HepG2 (cell line): ENCODE measurements at regions of chr2 and their contacts with region 1.

Region 1: DNA sequence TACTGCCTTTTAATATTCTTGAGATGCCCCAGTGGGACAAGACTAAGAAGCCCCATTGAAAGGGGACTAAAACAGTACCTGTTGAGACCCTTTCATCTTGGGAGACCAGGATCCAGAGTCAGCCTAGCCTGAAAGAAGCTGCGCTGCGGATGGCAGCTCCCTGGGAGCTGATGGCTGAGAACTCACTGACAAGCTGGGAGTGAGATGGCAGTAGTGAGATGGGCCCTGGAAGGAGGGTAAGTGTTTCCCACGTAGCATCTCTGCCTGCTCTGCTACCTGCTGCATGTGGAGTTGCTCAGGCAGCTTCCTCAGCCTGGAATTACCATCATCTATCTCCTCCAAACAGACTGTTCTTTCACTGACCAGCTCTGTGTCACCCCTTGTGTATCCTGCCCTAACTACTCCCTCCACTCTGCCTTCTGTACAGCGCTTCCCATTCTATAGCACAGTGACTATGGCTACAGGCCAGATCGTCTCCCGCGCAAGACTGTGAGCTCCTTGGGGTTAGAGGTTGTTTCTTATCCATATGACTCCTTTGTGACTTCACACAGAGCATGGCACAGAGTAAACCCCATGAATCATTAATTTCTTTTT is 330.4 kb downstream of the NBAS start:
- DNase-seq: no peak
- ATAC-seq: peak; percentile 44
- H3K4me3 ChIP-seq: no peak overlapping the region
- H3K27ac ChIP-seq: no peak overlapping the region
- H3K4me1 ChIP-seq: peaks cover 9% of the 10 kb centered on the region
- H3K27me3 ChIP-seq: no peaks in the 10 kb centered on the region
- CTCF ChIP-seq: no peak
- EP300 ChIP-seq: no peak
- POLR2A ChIP-seq: no peak
- RAD21 ChIP-seq: no peak

Region 2: DNA sequence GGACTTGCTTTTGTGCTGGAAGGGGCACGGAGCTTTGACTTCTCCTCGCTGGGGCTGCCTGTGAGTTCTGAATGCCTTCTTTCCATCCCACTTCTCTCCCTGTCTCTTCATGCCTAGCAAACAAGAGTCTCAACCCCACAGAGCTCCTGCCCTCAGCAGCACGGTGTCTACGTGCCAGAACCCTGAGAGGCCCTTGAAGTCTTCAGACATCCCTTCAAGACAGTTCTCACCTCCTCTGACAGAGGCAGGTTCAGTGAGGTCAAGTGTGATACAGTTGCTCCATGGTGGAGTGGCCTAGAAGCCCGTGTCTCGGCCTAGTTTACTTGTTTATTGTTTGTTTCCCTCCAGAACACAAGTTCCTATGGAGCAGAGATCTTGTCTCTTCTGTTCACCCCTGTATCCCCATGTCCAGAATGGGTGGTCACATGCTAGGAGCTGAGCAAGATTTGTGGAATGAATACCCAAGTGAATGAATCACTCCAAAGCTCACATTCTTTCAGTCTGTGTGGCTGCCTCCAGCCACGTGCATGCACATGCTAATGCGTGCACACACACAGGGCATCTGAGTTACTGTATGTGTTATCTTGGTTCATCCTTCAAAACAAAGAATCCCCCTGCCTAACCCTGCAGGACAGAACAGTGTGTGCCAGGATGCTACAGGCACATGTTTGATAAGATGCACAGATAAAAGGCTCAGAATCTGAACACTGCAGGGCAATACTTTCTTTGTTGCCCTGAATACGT is 61.2 kb before region 1 on chr2:
- CTCF ChIA-PET with region 1: no interaction called
- POLR2A ChIA-PET with region 1: no interaction called
- in situ Hi-C with region 1: no loop called
- intact Hi-C with region 1: loop called (anchors 5 kb)
- DNase-seq: peak; percentile 56
- ATAC-seq: no peak
- H3K4me3 ChIP-seq: no peak overlapping the region
- H3K27ac ChIP-seq: no peak overlapping the region
- H3K4me1 ChIP-seq: peaks cover 44% of the 10 kb centered on the region
- H3K27me3 ChIP-seq: no peaks in the 10 kb centered on the region
- CTCF ChIP-seq: no peak
- EP300 ChIP-seq: no peak
- POLR2A ChIP-seq: no peak
- RAD21 ChIP-seq: no peak

Region 3: DNA sequence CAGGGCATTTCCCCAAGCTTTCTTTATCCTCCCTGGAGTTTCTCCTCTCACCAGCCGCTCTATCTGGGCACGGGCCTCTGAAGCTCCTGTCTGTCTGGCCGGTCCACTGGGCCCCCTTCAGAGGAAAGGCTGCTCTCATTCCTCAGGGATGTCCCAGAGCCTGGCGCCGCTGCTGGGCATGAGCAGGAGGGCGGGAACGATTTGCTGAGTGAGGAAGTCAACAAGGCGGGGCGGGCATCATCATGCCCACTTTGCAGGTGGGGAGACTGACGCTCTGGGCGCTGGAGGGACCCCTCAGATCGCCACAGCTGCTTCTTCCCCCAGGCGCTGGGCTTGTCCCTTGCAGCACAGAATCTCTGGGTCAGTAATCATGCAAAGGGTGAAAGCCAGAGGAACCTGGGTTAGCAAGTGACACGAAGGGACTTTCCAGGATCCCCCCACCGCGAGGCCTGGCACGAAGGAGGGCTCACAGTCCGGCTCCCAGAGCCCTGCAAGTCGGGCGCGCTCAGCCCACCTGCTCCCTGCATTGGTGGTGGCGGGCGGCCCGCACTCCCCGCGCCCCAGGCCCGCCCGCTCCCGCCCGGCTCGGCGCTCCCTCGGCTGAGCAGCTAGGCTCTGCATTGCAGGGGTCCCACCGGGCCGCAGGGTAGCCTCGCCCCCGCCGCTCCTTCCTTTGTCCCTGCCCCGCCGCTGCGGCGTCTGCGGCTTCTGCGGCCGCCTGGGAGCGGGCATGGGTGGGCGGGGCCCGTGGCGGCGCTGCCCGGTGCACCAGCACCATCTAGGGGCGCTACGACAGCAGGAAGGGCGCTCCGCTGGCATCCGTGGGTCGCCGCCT is 1277.2 kb after region 1 on chr2:
- CTCF ChIA-PET with region 1: no interaction called
- POLR2A ChIA-PET with region 1: no interaction called
- in situ Hi-C with region 1: no loop called
- intact Hi-C with region 1: no loop called
- DNase-seq: peak; percentile 21
- ATAC-seq: peak; percentile 93
- H3K4me3 ChIP-seq: peak overlapping the region in 1 of 3 experiments; percentile 31; a peak in 1 of 6 replicates
- H3K27ac ChIP-seq: no peak overlapping the region
- H3K4me1 ChIP-seq: peaks cover 12% of the 10 kb centered on the region
- H3K27me3 ChIP-seq: peaks cover 0 to 22% of the 10 kb centered on the region in 2 experiments; a peak in 3 of 5 replicates
- CTCF ChIP-seq: peak; percentile 83
- EP300 ChIP-seq: no peak
- POLR2A ChIP-seq: no peak
- RAD21 ChIP-seq: peak; percentile 89